Activated CD4-positive, alpha-beta T cell treated with anti-CD3 and anti-CD28 coated beads for 36 hours (primary cell): ENCODE measurements at regions of chr9 and their contacts with region 1.

Region 1: GRCh38 chr9:32783169-32783891 is at the start of gene TMEM215:
- DNase-seq: no peak
- ATAC-seq: no peak
- H3K4me3 Mint-ChIP-seq: no peak within 1 kb of the TSS
- H3K27ac Mint-ChIP-seq: no peak within 1 kb of the TSS
- H3K4me1 Mint-ChIP-seq: no peaks in the 10 kb centered on the region
- H3K27me3 Mint-ChIP-seq: peaks cover 43% of the 10 kb centered on the region
- total RNA-seq, gene TMEM215: not detected

Region 2: GRCh38 chr9:32748013-32748412 is 35.3 kb before region 1 on chr9:
- CTCF ChIA-PET with region 1: no interaction called
- POLR2A ChIA-PET with region 1: no interaction called
- intact Hi-C with region 1: no loop called
- DNase-seq: no peak
- ATAC-seq: no peak
- H3K4me3 Mint-ChIP-seq: no peak overlapping the region
- H3K27ac Mint-ChIP-seq: no peak overlapping the region
- H3K4me1 Mint-ChIP-seq: no peaks in the 10 kb centered on the region
- H3K27me3 Mint-ChIP-seq: peaks cover 5% of the 10 kb centered on the region

Region 3: DNA sequence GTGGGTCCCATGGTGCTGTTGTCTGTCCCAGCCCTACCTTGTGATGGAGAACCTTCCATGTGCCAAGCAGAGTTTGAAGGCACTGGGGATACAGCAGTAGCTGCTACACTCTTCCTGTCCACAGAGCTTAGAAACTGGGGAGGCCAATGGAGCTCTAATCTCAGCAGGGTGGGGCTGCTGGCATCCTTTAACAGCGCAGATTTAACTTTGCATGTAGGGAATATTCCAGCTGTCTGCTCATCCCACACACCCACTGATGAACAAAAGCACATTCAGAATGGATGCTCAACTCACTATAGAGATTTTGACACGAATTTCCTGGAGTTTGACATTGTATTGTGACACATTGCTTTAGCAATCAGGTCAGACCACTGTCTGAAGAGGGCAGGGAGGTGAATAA is 49.0 kb after region 1 on chr9:
- CTCF ChIA-PET with region 1: no interaction called
- POLR2A ChIA-PET with region 1: no interaction called
- intact Hi-C with region 1: loop called in 1 of 2 experiments (anchors 5 kb)
- DNase-seq: no peak
- ATAC-seq: no peak
- H3K4me3 Mint-ChIP-seq: no peak overlapping the region
- H3K27ac Mint-ChIP-seq: no peak overlapping the region
- H3K4me1 Mint-ChIP-seq: no peaks in the 10 kb centered on the region
- H3K27me3 Mint-ChIP-seq: peaks cover 11% of the 10 kb centered on the region

Region 4: GRCh38 chr9:32839013-32839885 is 55.9 kb after region 1 on chr9:
- CTCF ChIA-PET with region 1: no interaction called
- POLR2A ChIA-PET with region 1: no interaction called
- intact Hi-C with region 1: loop called (anchors 5 to 10 kb)
- DNase-seq: no peak
- ATAC-seq: no peak
- H3K4me3 Mint-ChIP-seq: no peak overlapping the region
- H3K27ac Mint-ChIP-seq: no peak overlapping the region
- H3K4me1 Mint-ChIP-seq: no peaks in the 10 kb centered on the region
- H3K27me3 Mint-ChIP-seq: peaks cover 3% of the 10 kb centered on the region